Esophagus muscularis mucosa (tissue), 4 donors: ENCODE measurements at regions of chr11 and their contacts with region 1.

Region 1: GRCh38 chr11:61173456-61173855 is 12.2 kb upstream of the VPS37C start:
- DNase-seq: no peak
- H3K4me3 ChIP-seq: no peak overlapping the region
- H3K27ac ChIP-seq: no peak overlapping the region
- H3K4me1 ChIP-seq: no peaks in the 10 kb centered on the region
- H3K27me3 ChIP-seq: peaks cover 0 to 5% (median 0%) of the 10 kb centered on the region in 4 donors
- CTCF ChIP-seq: no peak
- EP300 ChIP-seq: no peak
- POLR2A ChIP-seq: no peak

Region 2: GRCh38 chr11:60985991-60986915 is 187.2 kb before region 1 on chr11:
- intact Hi-C with region 1: no loop called
- DNase-seq: no peak
- H3K4me3 ChIP-seq: no peak overlapping the region
- H3K27ac ChIP-seq: no peak overlapping the region
- H3K4me1 ChIP-seq: no peaks in the 10 kb centered on the region
- H3K27me3 ChIP-seq: peaks cover 0 to 6% (median 0%) of the 10 kb centered on the region in 4 donors
- CTCF ChIP-seq: no peak
- EP300 ChIP-seq: no peak
- POLR2A ChIP-seq: no peak

Region 3: DNA sequence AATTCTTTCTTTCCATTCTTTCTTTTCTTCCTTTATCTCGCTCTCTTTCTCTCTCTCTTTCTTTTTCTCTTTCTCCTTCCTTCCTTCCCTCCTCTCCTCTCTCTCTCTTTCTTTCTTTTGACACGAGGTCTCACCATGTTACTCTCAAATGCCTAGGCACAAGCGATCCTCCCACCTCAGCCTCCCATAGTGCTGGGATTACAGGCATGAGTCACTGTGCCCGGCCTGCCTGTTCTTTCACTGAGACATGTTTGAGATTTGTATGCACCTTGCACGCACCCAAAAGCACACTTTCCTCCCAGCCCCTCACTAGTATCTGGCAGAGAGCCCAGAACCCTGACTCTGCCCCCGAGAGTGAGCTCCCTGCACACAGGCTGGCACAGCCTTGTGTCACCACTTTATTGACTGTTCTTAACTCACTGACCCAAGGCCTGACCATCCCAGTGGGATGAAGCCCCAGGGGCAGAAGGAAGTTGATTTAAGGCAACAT is 145.1 kb before region 1 on chr11:
- intact Hi-C with region 1: no loop called
- DNase-seq: no peak
- H3K4me3 ChIP-seq: no peak overlapping the region
- H3K27ac ChIP-seq: no peak overlapping the region
- H3K4me1 ChIP-seq: peaks cover 14 to 24% (median 17%) of the 10 kb centered on the region in 4 donors
- H3K27me3 ChIP-seq: no peaks in the 10 kb centered on the region
- CTCF ChIP-seq: no peak
- EP300 ChIP-seq: no peak
- POLR2A ChIP-seq: no peak

Region 4: GRCh38 chr11:61120706-61121191 is 52.7 kb before region 1 on chr11:
- intact Hi-C with region 1: loop called (anchors 5 kb)
- DNase-seq: no peak
- H3K4me3 ChIP-seq: no peak overlapping the region
- H3K27ac ChIP-seq: no peak overlapping the region
- H3K4me1 ChIP-seq: peaks cover 5 to 22% (median 14%) of the 10 kb centered on the region in 4 donors
- H3K27me3 ChIP-seq: no peaks in the 10 kb centered on the region
- CTCF ChIP-seq: no peak
- EP300 ChIP-seq: no peak
- POLR2A ChIP-seq: no peak

Region 5: DNA sequence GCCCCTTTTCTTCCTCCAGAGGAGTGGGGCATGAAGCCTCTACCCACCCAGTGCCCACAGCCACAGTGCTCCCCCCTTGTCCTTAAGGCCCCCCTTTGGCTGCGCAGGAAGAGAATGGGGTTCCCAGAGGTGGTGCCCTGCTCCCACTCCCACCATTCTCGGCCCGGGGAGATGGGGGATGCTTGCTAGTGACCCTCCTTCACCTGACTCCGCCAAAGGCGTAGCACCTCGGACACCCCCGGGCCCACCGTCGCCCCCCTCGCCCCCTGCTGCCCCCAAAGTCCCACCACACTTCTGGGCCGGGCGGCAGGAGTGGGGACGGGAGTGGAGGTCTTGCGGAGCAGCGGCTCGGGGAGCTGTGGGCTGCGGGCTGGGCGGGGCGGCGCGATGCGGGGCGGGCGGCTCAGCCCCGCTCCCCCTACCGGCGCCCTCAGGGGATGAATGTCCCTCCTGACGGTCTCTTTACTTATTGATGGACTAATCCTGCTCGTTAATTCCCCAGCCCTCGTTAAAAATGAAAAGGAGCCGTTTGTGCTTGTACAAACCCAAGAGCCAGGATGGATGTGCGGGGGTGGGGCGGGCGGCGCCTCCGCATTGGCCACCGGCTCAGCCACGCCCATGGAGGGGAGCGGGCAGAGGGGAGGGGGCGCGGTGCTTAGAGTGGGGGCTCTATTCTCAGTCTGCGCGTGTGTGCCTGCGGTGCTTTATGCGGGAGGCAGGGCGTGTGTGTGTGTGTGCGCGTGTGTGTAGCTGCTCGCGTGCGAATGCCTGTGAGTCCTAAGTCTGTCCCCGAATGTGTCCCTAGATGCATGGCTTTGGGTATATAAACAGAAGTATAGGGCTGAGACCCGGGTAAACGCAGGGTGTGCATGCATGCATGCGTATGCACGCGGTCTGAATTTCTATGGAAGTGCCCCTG is 381.9 kb after region 1 on chr11:
- intact Hi-C with region 1: no loop called
- DNase-seq: no peak
- H3K4me3 ChIP-seq: no peak overlapping the region
- H3K27ac ChIP-seq: no peak overlapping the region
- H3K4me1 ChIP-seq: peaks cover 7 to 15% (median 12%) of the 10 kb centered on the region in 4 donors
- H3K27me3 ChIP-seq: peaks cover 0 to 96% (median 16%) of the 10 kb centered on the region in 4 donors
- CTCF ChIP-seq: no peak
- EP300 ChIP-seq: no peak
- POLR2A ChIP-seq: no peak